ENCODE measurements at regions of chr16 and their contacts with region 1.

Region 1: DNA sequence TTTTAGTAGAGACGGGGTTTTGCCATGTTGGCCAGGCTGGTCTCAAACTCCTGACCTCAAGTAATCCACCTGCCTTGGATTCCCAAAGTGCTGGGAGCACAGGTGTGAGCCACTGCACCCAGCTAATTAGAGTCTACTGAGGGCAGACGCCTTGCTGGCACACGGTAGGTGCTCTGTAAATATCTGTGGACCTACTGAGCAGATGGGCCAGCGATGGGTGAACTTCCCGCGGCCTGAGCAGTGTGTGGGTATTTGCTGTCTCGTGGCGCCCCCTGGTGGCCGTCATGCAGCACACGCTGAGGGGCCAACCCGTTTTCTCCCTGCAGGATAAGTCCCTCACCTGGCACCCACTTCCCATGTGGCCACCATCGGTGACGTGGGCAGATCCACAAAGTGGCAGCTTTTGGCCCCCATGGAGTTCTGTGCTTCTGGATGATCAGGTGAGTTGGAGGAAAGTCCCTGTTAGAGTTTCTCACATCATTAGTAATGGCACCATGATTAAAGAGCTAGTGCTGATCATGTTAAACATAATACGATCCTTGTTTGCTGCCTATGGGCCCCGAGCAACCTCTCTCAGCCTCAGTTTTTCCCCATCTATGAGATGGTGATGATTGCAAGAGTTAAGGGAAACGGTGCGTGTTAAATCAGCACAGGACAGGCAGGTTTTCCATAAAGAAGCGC is 40.7 kb downstream of the ZDHHC7 start:
- DNase-seq: peak; percentile 82 to 86
- H3K4me3 ChIP-seq: no peak overlapping the region
- H3K4me3 Mint-ChIP-seq: no peak overlapping the region
- H3K27ac Mint-ChIP-seq: no peak overlapping the region
- H3K4me1 ChIP-seq: no peaks in the 10 kb centered on the region
- H3K4me1 Mint-ChIP-seq: peaks cover 7% of the 10 kb centered on the region
- H3K27me3 ChIP-seq: no peaks in the 10 kb centered on the region
- H3K27me3 Mint-ChIP-seq: no peaks in the 10 kb centered on the region
- CTCF ChIP-seq: peak; percentile 91 to 97

Region 2: DNA sequence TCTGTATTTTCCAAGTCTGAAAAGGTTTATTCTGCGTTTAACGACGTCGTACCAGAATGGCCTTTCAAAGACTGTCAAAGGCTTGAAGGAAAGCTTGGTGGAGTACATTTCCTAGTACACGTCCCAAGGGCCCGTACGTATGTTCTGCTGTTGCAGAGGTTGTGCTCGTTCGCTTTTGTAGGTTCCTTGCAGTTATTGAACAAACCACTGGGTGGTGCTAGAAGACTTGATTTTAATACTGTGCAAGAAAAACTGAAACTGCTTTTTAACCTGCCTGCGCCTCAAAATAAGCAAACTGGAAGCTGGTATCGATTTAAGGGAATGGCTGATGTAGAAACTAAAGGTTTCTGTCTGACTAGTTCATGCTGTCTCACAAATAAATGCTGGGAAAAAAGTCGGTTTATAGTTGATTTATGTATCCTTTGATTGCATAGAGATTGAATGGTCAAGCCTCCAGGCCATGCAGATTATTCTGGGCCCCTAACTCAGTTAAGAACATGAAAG is 216.2 kb before region 1 on chr16:
- CTCF ChIA-PET with region 1: interaction called, 6 read pairs
- POLR2A ChIA-PET with region 1: no interaction called
- intact Hi-C with region 1: loop called (anchors 1 kb)
- DNase-seq: peak; percentile 81 to 85
- H3K4me3 ChIP-seq: no peak overlapping the region
- H3K4me3 Mint-ChIP-seq: no peak overlapping the region
- H3K27ac Mint-ChIP-seq: no peak overlapping the region
- H3K4me1 ChIP-seq: no peaks in the 10 kb centered on the region
- H3K4me1 Mint-ChIP-seq: peaks cover 6% of the 10 kb centered on the region
- H3K27me3 ChIP-seq: no peaks in the 10 kb centered on the region
- H3K27me3 Mint-ChIP-seq: no peaks in the 10 kb centered on the region
- CTCF ChIP-seq: peak; percentile 74 to 95

Region 3: GRCh38 chr16:84925092-84925772 is 45.4 kb before region 1 on chr16:
- CTCF ChIA-PET with region 1: interaction called, 21 read pairs
- POLR2A ChIA-PET with region 1: no interaction called
- intact Hi-C with region 1: loop called (anchors 1 kb)
- DNase-seq: peak; percentile 76 to 87
- H3K4me3 ChIP-seq: no peak overlapping the region
- H3K4me3 Mint-ChIP-seq: no peak overlapping the region
- H3K27ac Mint-ChIP-seq: no peak overlapping the region
- H3K4me1 ChIP-seq: peaks cover 16% of the 10 kb centered on the region
- H3K4me1 Mint-ChIP-seq: peaks cover 8% of the 10 kb centered on the region
- H3K27me3 ChIP-seq: no peaks in the 10 kb centered on the region
- H3K27me3 Mint-ChIP-seq: no peaks in the 10 kb centered on the region
- CTCF ChIP-seq: peak; percentile 94 to 97

Region 4: GRCh38 chr16:84942779-84943178 is 27.8 kb before region 1 on chr16:
- CTCF ChIA-PET with region 1: interaction called, 12 read pairs
- POLR2A ChIA-PET with region 1: no interaction called
- intact Hi-C with region 1: no loop called
- DNase-seq: no peak
- H3K4me3 ChIP-seq: no peak overlapping the region
- H3K4me3 Mint-ChIP-seq: no peak overlapping the region
- H3K27ac Mint-ChIP-seq: no peak overlapping the region
- H3K4me1 ChIP-seq: peaks cover under 1% of the 10 kb centered on the region; the same call in 1 of the 2 replicates
- H3K4me1 Mint-ChIP-seq: no peaks in the 10 kb centered on the region
- H3K27me3 ChIP-seq: no peaks in the 10 kb centered on the region
- H3K27me3 Mint-ChIP-seq: no peaks in the 10 kb centered on the region
- CTCF ChIP-seq: no peak

Measured in Caco-2 (cell line).